PC-3 (cell line): ENCODE measurements at regions of chr1 and their contacts with region 1.

Region 1: DNA sequence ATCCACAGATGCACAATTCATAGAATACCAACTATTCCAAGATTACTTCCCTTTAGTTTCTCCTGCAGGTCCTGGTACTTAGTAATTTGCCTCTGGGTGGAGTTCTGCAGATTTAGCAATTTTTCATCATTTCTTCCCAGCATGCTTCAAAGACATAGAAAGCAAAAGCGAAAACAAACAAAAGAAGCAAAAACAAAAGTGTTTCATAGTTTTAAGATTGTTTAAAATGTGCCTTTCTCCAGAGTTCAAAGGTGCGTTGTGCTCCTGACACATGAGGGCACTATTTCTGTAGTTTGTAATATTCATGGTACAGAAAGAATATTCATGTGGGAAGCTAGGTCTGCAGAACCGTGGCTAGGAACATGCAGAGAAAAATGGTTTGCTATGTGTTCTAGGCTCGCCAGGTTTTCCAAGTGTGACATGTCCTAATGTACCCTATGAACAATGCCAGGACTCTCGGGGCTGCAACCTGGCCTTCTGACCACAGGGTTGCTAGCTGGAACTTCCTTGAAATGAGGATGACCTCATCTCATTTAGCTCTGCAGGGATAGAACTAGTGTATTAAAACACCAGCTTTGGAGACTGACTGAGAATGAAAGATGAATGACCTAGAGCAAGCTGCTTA is 30.0 kb upstream of the RCSD1 start:
- DNase-seq: peak; percentile 58
- ATAC-seq: peak; percentile 88
- H3K4me3 ChIP-seq: no peak overlapping the region
- H3K27ac ChIP-seq: no peak overlapping the region
- H3K4me1 ChIP-seq: no peaks in the 10 kb centered on the region
- H3K27me3 ChIP-seq: peaks cover 12% of the 10 kb centered on the region
- CTCF ChIP-seq: peak; percentile 82

Region 2: DNA sequence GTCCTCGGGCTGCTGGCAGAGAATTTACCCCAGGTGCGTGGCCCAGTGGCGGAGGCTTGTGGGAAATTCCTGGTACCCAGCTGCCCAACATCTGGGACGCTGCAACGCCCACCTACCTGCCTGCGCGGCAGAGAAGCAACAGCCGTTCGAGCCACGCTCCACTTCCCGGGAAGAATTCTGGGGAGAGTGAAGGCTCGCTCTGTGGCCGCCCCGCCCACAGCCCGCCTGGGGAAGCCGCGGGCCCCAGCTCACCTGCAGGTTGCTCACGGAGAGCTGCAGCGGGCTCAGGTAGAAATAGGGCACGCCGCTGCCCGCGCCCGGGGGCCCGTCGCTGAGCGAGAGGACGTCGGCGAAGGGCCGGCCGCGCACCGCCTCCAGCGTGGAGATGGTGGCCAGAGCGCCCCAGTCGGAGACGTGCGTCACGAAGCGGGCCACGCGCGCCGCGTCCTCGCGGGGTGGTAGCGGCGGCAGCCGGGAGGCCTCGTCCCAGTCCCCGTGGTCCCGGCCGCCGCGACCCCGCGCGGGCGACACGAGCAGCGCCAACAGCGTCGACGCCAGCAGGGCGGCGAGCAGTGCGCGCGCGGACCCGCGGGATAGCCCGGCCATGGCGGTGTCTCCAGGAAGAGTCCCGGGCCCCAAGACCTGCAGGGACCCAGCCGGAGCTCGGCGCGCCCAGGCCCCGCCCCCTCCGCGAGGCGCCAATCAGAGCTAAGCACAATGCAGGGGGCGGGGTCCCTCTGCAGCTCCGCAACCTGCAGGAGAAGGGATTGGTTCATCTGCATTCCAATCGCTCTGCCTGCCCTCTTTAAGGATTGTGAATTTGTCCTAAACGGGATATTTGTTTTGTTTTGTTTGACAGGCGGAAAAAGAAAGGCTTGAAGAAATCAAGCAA is 46.7 kb before region 1 on chr1 and contains the start of gene CREG1:
- CTCF ChIA-PET with region 1: no interaction called
- POLR2A ChIA-PET with region 1: no interaction called
- intact Hi-C with region 1: loop called (anchors 1 kb)
- DNase-seq: peak; percentile 97
- ATAC-seq: peak; percentile 99
- H3K4me3 ChIP-seq: peak within 1 kb of the TSS; percentile 74
- H3K27ac ChIP-seq: no peak within 1 kb of the TSS
- H3K4me1 ChIP-seq: peaks cover 14% of the 10 kb centered on the region; the same call in 1 of the 2 replicates
- H3K27me3 ChIP-seq: no peaks in the 10 kb centered on the region
- CTCF ChIP-seq: no peak
- total RNA-seq, gene CREG1: 55.7 and 63.9 TPM in 2 replicates

Region 3: DNA sequence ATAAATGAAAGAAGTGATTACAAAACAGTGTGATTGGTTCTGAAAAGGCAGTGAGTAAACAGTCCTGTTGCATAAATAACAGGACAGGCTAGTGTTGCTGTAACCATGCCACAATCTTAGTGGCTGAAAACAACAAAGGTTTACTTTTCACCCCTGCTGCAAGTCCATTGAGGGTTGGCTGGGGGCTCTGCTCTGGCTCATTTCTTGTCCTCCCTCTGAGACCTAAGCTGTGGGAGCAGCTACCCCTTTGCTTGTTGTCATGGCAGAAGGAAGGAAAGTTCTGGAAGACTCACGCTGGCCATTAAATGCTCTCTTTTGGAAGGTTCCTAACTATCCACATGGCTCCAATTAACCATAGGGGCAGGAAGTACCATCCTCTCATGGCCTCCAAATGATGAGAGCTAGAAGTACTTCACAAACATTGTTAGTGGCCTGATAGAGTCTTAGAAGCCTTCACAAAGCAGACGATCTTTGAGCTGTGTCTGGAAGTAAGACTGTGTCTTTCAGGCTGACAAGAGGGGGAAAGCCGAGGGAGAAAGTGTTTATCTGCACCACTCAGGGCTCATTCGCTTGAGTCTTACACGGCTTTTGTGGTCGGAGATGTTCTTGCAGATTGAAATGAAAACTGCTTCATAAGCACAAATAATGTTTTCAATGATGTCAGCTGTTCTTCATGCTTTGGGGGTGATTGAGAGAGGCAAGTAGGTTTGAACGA is 41.9 kb after region 1 on chr1:
- CTCF ChIA-PET with region 1: no interaction called
- POLR2A ChIA-PET with region 1: no interaction called
- intact Hi-C with region 1: no loop called
- DNase-seq: no peak
- ATAC-seq: no peak
- H3K4me3 ChIP-seq: no peak overlapping the region
- H3K27ac ChIP-seq: no peak overlapping the region
- H3K4me1 ChIP-seq: no peaks in the 10 kb centered on the region
- H3K27me3 ChIP-seq: peaks cover 48% of the 10 kb centered on the region
- CTCF ChIP-seq: no peak

Region 4: GRCh38 chr1:167829868-167830267 is 229.8 kb after region 1 on chr1:
- CTCF ChIA-PET with region 1: no interaction called
- POLR2A ChIA-PET with region 1: no interaction called
- intact Hi-C with region 1: no loop called
- DNase-seq: no peak
- ATAC-seq: no peak
- H3K4me3 ChIP-seq: no peak overlapping the region
- H3K27ac ChIP-seq: no peak overlapping the region
- H3K4me1 ChIP-seq: no peaks in the 10 kb centered on the region
- H3K27me3 ChIP-seq: no peaks in the 10 kb centered on the region
- CTCF ChIP-seq: no peak